ENCODE measurements at regions of chr7 and their contacts with region 1.

Region 1: GRCh38 chr7:35707422-35707821 is 12.5 kb upstream of the HERPUD2 start:
- DNase-seq: no peak
- H3K4me3 ChIP-seq: no peak overlapping the region
- H3K27ac ChIP-seq: no peak overlapping the region
- H3K27me3 ChIP-seq: no peaks in the 10 kb centered on the region
- CTCF ChIP-seq: no peak

Region 2: GRCh38 chr7:35906191-35906908 is 198.9 kb after region 1 on chr7:
- intact Hi-C with region 1: loop called (anchors 1 to 2 kb)
- DNase-seq: peak in 4 of 10 donors; percentile 50 to 75 (median 72)
- H3K4me3 ChIP-seq: no peak overlapping the region
- H3K27ac ChIP-seq: peak overlapping the region in 58 of 59 donors; percentile 17 to 90 (median 79)
- H3K27me3 ChIP-seq: no peaks in the 10 kb centered on the region
- CTCF ChIP-seq: peak; percentile 82 to 99 (median 94)

Region 3: DNA sequence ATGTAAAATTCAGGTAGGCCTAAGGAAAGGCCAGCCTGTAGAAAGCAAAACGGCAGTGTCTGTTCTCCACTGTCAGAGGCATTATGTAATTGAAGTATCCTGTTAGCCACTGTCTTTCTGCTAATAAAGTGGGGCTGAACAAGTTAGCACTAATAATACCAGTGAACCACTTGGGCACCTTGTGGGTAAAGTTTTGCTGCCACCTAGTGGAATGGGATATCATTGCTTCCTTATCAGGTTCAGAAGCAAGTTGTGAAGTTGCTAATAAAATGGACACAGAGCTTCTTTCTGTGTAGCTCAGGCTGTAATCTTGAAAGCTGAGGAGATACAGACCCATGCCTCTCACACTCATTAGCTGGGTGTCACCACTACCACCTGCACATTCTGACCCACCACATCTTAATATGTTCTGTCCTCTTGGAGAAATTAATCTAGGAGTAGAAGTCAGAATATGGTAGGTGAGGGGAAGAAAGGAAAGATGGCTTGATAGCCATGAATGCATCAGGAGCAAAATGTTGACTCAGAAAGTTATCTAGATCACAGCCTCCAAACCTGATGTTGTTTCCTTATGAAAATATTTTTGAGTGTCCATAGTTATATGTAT is 268.5 kb after region 1 on chr7:
- intact Hi-C with region 1: loop called (anchors 1 to 5 kb)
- DNase-seq: peak in 3 of 10 donors; percentile 44 to 57 (median 48)
- H3K4me3 ChIP-seq: no peak overlapping the region
- H3K27ac ChIP-seq: peak overlapping the region in 1 of 59 donors; percentile 22
- H3K27me3 ChIP-seq: no peaks in the 10 kb centered on the region
- CTCF ChIP-seq: peak; percentile 77 to 97 (median 90)

Region 4: GRCh38 chr7:35985126-35985754 is 277.8 kb after region 1 on chr7:
- intact Hi-C with region 1: loop called in 1 of 2 experiments (anchors 5 kb)
- DNase-seq: peak; percentile 58 to 88 (median 81)
- H3K4me3 ChIP-seq: no peak overlapping the region
- H3K27ac ChIP-seq: no peak overlapping the region
- H3K27me3 ChIP-seq: no peaks in the 10 kb centered on the region
- CTCF ChIP-seq: peak; percentile 62 to 99 (median 94)

Region 5: DNA sequence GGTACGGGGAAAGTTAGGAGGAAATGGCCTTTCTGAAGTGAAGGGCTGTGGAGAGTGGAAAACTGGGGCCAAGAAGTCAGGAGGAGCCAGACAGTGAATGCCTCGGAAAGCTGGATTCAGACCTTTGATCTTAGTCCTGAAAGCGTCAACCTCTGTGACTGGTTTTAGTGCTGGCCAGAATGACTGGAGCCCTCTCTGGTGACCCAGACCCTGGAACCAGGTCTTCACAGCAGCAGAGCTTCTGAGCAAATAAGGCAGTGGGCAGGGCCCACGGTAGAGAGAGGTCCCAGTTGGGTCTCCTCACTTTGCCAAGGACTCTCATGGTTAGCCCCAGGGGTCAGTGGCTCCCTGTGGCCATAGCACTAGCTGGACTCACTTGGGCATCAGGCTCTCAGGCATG is 287.9 kb after region 1 on chr7:
- intact Hi-C with region 1: no loop called
- DNase-seq: no peak
- H3K4me3 ChIP-seq: no peak overlapping the region
- H3K27ac ChIP-seq: no peak overlapping the region
- H3K27me3 ChIP-seq: no peaks in the 10 kb centered on the region
- CTCF ChIP-seq: no peak

Measured in dorsolateral prefrontal cortex (tissue), 120 donors.